ENCODE measurements at regions of chr11 and their contacts with region 1.

Region 1: GRCh38 chr11:134050541-134051383 is 18.1 kb upstream of the JAM3 start:
- DNase-seq: peak; percentile 69 to 86
- H3K4me3 ChIP-seq: 0 out of 2 replicates have a peak overlapping the region, but pooled peaks have one; percentile 11
- H3K4me3 Mint-ChIP-seq: peak overlapping the region; percentile 47
- H3K27ac Mint-ChIP-seq: no peak overlapping the region
- H3K4me1 ChIP-seq: peaks cover 4% of the 10 kb centered on the region; the same call in 1 of the 2 replicates
- H3K4me1 Mint-ChIP-seq: no peaks in the 10 kb centered on the region
- H3K27me3 ChIP-seq: no peaks in the 10 kb centered on the region; the same call in 1 of the 2 replicates
- H3K27me3 Mint-ChIP-seq: peaks cover 34% of the 10 kb centered on the region
- CTCF ChIP-seq: peak; percentile 98

Region 2: GRCh38 chr11:134004496-134005172 is 46.1 kb before region 1 on chr11:
- CTCF ChIA-PET with region 1: no interaction called
- POLR2A ChIA-PET with region 1: no interaction called
- intact Hi-C with region 1: no loop called
- DNase-seq: no peak
- H3K4me3 ChIP-seq: no peak overlapping the region
- H3K4me3 Mint-ChIP-seq: no peak overlapping the region
- H3K27ac Mint-ChIP-seq: no peak overlapping the region
- H3K4me1 ChIP-seq: no peaks in the 10 kb centered on the region
- H3K4me1 Mint-ChIP-seq: no peaks in the 10 kb centered on the region
- H3K27me3 ChIP-seq: no peaks in the 10 kb centered on the region; the same call in 1 of the 2 replicates
- H3K27me3 Mint-ChIP-seq: peaks cover 9% of the 10 kb centered on the region
- CTCF ChIP-seq: no peak

Region 3: GRCh38 chr11:134037046-134037908 is 13.5 kb before region 1 on chr11:
- CTCF ChIA-PET with region 1: interaction called, 17 read pairs
- POLR2A ChIA-PET with region 1: no interaction called
- intact Hi-C with region 1: no loop called
- DNase-seq: peak; percentile 69
- H3K4me3 ChIP-seq: peak overlapping the region; percentile 51
- H3K4me3 Mint-ChIP-seq: peak overlapping the region; percentile 73
- H3K27ac Mint-ChIP-seq: no peak overlapping the region
- H3K4me1 ChIP-seq: 0 out of 2 replicates have a peak, but pooled peaks cover 3% of the 10 kb centered on the region
- H3K4me1 Mint-ChIP-seq: no peaks in the 10 kb centered on the region
- H3K27me3 ChIP-seq: no peaks in the 10 kb centered on the region; the same call in 1 of the 2 replicates
- H3K27me3 Mint-ChIP-seq: peaks cover 7% of the 10 kb centered on the region
- CTCF ChIP-seq: no peak

Region 4: DNA sequence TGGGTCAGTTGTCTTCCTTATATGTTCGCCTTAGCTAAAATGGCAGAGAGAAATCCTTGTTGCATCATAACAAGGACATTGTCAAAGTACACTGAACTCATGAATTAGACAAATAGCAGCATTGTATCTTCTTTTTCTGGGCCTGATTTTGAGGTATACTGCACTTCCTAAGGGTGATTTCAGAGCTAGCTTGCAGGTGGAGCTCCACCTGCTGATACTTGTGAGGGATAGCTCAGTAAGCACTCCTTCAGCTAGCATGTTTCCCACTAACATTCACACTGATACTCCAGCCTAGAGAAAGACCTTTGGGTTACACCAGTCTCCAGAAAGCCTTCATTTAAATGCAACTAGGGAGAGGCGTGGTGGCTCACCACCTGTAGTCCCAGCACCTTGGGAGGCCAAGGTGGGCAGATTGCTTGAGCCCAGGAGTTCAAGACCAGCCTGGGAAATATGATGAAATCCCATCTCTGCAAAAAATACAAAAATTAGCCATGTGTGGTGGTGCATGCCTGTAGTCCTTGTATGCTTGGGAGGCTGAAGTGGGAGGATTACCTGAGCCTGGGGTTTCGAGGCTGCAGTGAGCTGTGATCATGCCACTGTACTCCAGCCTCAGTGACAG is 47.9 kb after region 1 on chr11:
- CTCF ChIA-PET with region 1: interaction called, 70 read pairs
- POLR2A ChIA-PET with region 1: no interaction called
- intact Hi-C with region 1: loop called (anchors 1 kb)
- DNase-seq: peak in 1 of 2 experiments; percentile 37
- H3K4me3 ChIP-seq: no peak overlapping the region
- H3K4me3 Mint-ChIP-seq: no peak overlapping the region
- H3K27ac Mint-ChIP-seq: no peak overlapping the region
- H3K4me1 ChIP-seq: no peaks in the 10 kb centered on the region; the same call in 1 of the 2 replicates
- H3K4me1 Mint-ChIP-seq: no peaks in the 10 kb centered on the region
- H3K27me3 ChIP-seq: 0 out of 2 replicates have a peak, but pooled peaks cover 1% of the 10 kb centered on the region
- H3K27me3 Mint-ChIP-seq: peaks cover 5% of the 10 kb centered on the region
- CTCF ChIP-seq: peak; percentile 58 to 88

Region 5: DNA sequence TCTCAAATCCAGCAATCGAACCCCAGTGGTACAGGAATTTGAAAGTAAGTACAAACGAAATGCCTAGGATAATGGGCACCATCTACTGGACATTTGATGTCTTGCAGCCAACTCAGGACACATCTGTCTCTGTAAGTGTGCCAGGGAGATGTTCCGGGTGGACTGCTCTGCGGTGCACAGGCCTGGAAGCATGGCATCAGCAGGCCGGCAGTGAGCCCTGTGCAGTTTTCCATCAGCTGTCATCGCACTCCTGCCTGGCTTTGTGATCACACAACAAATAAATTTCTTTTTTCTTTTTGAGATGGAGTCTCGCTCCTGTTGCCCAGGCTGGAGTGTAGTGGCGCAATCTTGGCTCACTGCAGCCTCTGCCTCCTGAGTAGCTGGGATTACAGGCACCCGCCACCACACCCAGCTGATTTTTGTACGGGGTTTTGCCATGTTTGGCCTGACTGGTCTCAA is 89.1 kb after region 1 on chr11:
- CTCF ChIA-PET with region 1: interaction called, 8 read pairs
- POLR2A ChIA-PET with region 1: no interaction called
- intact Hi-C with region 1: loop called (anchors 1 kb)
- DNase-seq: peak; percentile 70 to 73
- H3K4me3 ChIP-seq: no peak overlapping the region
- H3K4me3 Mint-ChIP-seq: no peak overlapping the region
- H3K27ac Mint-ChIP-seq: no peak overlapping the region
- H3K4me1 ChIP-seq: no peaks in the 10 kb centered on the region
- H3K4me1 Mint-ChIP-seq: no peaks in the 10 kb centered on the region
- H3K27me3 ChIP-seq: no peaks in the 10 kb centered on the region
- H3K27me3 Mint-ChIP-seq: peaks cover 33% of the 10 kb centered on the region
- CTCF ChIP-seq: peak; percentile 88 to 93

Measured in Caco-2 (cell line).